ENCODE measurements at regions of chr17 and their contacts with region 1.

Region 1: DNA sequence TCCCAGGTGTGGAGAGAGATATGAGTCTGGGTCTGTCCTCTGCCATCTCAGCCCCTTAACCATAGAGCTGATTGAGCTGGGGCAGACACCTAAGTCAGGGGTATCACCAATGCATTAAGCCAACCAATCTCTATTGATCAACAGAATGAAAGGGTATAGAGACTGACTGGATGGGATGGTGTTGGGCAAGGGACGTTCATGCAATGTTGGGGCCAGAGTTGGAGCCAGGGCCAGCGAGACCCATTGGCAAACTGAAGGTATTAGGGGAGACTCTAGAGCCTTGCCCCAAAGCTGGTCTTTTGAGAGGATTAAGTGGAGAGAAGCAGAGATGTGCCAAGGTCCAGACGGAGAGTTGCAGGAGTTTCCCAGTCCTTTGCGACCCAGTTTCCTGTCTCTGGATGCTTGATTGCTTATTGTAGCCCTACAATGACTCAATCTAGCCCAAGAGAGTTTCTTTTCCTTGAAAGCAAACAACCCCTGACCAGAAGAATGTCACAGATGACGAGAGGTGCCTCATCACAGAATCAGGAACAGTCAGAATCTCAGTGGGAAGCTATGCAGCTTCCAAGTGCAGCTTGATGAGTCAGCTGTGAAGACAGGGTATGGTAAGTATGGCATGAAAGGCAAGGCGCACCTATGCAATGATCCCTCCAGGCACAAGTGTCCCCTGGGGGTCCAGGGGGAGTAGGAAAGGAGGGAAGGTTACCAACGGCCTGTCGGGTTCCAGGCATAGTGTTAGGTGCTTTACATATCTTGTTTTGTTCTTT is 137.2 kb downstream of the UTP18 start:
- DNase-seq: no peak
- ATAC-seq: no peak
- H3K4me3 ChIP-seq: no peak overlapping the region
- H3K27ac ChIP-seq: no peak overlapping the region
- H3K4me1 ChIP-seq: no peaks in the 10 kb centered on the region
- H3K27me3 ChIP-seq: peaks cover 3 to 27% of the 10 kb centered on the region in 2 experiments; a peak in 3 of 5 replicates
- CTCF ChIP-seq: no peak
- EP300 ChIP-seq: no peak
- POLR2A ChIP-seq: no peak
- RAD21 ChIP-seq: no peak

Region 2: DNA sequence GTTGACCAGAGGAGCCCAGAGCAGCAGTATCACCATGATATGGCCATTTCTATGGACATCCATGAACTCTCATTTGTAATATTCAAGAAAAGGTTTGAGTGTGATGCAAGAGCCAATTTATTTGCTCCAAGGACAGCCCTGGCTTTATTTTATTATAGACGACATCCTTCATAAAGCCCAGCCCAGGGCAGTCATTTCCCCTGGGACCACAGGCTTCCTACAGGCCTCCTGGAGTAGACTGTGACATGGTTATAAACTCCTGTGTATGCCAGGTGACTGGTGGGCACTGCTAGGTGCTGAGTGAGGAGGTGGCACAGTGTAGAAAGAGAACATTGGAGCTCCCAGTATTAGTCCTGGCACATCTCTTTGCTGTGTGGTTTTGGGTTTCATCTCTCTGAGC is 16.3 kb before region 1 on chr17:
- CTCF ChIA-PET with region 1: no interaction called
- POLR2A ChIA-PET with region 1: no interaction called
- in situ Hi-C with region 1: no loop called
- intact Hi-C with region 1: no loop called
- DNase-seq: no peak
- ATAC-seq: no peak
- H3K4me3 ChIP-seq: no peak overlapping the region
- H3K27ac ChIP-seq: no peak overlapping the region
- H3K4me1 ChIP-seq: no peaks in the 10 kb centered on the region
- H3K27me3 ChIP-seq: 0 out of 5 replicates have a peak, but pooled peaks cover 0 to 6% of the 10 kb centered on the region in 2 experiments
- CTCF ChIP-seq: no peak
- EP300 ChIP-seq: no peak
- POLR2A ChIP-seq: no peak
- RAD21 ChIP-seq: no peak

Region 3: GRCh38 chr17:51860954-51861561 is 463.5 kb after region 1 on chr17:
- CTCF ChIA-PET with region 1: no interaction called
- POLR2A ChIA-PET with region 1: no interaction called
- in situ Hi-C with region 1: loop called (anchors 25 kb)
- intact Hi-C with region 1: no loop called
- DNase-seq: peak; percentile 44
- ATAC-seq: peak; percentile 76
- H3K4me3 ChIP-seq: no peak overlapping the region
- H3K27ac ChIP-seq: no peak overlapping the region
- H3K4me1 ChIP-seq: no peaks in the 10 kb centered on the region
- H3K27me3 ChIP-seq: no peaks in the 10 kb centered on the region
- CTCF ChIP-seq: peak; percentile 78
- EP300 ChIP-seq: no peak
- POLR2A ChIP-seq: no peak
- RAD21 ChIP-seq: no peak

Measured in HepG2 (cell line).